Dendritic cell treated with granulocyte-macrophage colony-stimulating factor and Interleukin-4, amounts not matched to agents 40 ng/mL and 50 ng/mL, for 4 days (primary cell): ENCODE measurements at regions of chr9 and their contacts with region 1.

Region 1: DNA sequence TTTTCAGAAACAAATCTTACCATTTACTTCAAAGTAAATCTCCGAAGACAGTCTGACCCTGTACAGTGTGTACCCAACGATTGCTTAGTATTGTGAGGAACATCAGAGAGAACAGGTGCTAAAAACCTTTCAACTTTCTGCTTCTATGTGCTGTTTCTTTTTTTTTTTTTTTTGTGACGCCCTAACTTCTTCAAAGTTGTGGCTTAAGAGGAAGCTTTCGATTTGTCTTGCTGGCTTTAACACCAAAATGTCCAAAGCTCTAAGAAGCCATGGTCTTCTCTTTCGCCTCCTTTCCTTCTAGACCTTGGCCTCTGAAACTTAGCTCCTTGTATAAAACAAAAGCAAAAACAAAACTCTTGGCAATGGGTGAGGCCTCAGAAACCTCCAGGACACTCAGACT is 1.2 kb downstream of the TNFSF8 start:
- H3K4me3 Mint-ChIP-seq: peak overlapping the region; percentile 79
- H3K27ac Mint-ChIP-seq: peak overlapping the region; percentile 92
- H3K4me1 Mint-ChIP-seq: peaks cover 48% of the 10 kb centered on the region
- H3K27me3 Mint-ChIP-seq: peaks cover 3% of the 10 kb centered on the region

Region 2: DNA sequence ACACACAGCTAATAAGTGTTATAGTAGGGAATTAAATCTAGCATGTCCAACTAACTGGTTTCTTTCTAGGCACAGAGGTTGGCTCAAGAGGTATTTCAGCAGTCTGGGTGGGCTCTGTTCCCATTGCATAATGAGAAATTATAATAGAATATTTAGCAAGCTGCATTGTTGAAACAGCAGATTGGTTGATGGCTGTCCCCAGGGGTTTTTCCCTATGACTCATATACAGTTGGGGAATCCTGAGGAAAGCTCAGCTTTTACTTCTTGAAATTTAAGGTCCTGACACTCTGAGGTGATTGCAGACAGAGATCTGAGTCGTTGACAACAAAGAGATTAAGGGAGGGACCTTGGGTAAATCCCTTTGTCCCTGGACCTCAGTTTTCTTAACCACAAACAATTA is 39.5 kb after region 1 on chr9:
- intact Hi-C with region 1: loop called (anchors 5 kb)
- H3K4me3 Mint-ChIP-seq: no peak overlapping the region
- H3K27ac Mint-ChIP-seq: peak overlapping the region; percentile 49
- H3K4me1 Mint-ChIP-seq: peaks cover 26% of the 10 kb centered on the region
- H3K27me3 Mint-ChIP-seq: no peaks in the 10 kb centered on the region

Region 3: DNA sequence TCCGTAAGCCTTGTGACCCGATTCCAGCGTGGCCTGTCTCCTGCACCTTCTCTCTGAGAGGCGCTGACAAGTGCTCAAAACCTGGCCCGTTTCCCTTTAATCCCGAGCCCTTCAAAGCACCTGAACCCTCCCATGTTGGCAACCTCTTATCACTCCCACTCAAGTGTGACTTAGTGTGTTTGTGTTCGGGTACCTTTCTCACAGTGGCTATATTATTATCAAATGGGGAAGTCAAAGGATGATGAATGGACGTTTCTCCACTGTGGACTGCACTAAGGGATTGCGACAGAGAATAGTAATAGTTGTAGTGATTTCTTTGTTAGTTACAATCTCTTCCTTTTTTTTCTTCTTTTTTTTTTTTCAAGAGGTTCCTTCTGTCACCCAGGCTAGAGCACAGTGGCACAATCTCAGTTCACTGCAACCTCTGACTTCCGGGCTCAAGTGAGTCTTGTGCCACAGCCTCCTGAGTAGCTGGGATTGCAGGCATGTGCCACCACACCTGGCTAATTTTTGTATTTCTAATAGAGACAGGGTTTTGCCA is 66.5 kb after region 1 on chr9:
- intact Hi-C with region 1: loop called (anchors 5 kb)
- H3K4me3 Mint-ChIP-seq: no peak overlapping the region
- H3K27ac Mint-ChIP-seq: no peak overlapping the region
- H3K4me1 Mint-ChIP-seq: peaks cover 45% of the 10 kb centered on the region
- H3K27me3 Mint-ChIP-seq: peaks cover 3% of the 10 kb centered on the region

Region 4: GRCh38 chr9:115008536-115009270 is 79.5 kb after region 1 on chr9:
- intact Hi-C with region 1: no loop called
- H3K4me3 Mint-ChIP-seq: no peak overlapping the region
- H3K27ac Mint-ChIP-seq: no peak overlapping the region
- H3K4me1 Mint-ChIP-seq: peaks cover 60% of the 10 kb centered on the region
- H3K27me3 Mint-ChIP-seq: peaks cover 11% of the 10 kb centered on the region